ENCODE measurements at regions of chr3 and their contacts with region 1.

Region 1: DNA sequence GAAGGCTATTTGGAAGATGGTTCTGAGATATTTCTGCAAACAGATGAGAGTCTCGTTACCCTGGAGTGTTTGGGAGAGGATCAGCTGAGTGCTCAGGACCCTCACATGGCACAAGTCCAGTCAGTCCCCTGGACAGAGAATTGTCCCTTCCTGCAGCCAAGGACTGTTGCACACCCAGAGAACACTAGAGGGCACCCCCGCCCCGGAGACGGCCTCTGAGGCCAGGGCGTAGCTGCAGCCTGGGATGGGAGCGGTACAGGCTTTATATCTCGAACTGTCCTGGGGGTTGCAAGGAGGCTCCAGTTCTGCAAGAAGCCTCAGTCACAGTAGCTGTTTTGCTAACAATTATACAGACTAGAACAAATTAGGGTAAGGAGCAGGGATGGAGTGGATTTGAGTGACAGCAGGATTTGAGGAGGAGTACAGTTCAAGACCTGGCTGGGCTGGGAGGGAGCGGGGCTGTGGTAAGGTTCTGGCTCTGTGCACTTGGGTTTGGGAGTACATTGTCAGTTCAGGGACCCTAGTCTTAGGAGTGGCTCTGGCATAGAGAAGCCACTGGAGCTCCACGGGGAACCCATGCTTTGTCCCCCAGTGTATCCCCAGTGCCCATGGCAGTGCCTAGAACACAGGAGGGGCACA is 67.6 kb upstream of the HACD2 start:
- DNase-seq: peak; percentile 77 to 90
- H3K4me3 ChIP-seq: no peak overlapping the region
- H3K4me3 Mint-ChIP-seq: no peak overlapping the region
- H3K27ac Mint-ChIP-seq: no peak overlapping the region
- H3K4me1 ChIP-seq: no peaks in the 10 kb centered on the region; the same call in 1 of the 2 replicates
- H3K4me1 Mint-ChIP-seq: peaks cover 15% of the 10 kb centered on the region
- H3K27me3 ChIP-seq: no peaks in the 10 kb centered on the region
- H3K27me3 Mint-ChIP-seq: no peaks in the 10 kb centered on the region
- CTCF ChIP-seq: peak; percentile 87 to 96

Region 2: DNA sequence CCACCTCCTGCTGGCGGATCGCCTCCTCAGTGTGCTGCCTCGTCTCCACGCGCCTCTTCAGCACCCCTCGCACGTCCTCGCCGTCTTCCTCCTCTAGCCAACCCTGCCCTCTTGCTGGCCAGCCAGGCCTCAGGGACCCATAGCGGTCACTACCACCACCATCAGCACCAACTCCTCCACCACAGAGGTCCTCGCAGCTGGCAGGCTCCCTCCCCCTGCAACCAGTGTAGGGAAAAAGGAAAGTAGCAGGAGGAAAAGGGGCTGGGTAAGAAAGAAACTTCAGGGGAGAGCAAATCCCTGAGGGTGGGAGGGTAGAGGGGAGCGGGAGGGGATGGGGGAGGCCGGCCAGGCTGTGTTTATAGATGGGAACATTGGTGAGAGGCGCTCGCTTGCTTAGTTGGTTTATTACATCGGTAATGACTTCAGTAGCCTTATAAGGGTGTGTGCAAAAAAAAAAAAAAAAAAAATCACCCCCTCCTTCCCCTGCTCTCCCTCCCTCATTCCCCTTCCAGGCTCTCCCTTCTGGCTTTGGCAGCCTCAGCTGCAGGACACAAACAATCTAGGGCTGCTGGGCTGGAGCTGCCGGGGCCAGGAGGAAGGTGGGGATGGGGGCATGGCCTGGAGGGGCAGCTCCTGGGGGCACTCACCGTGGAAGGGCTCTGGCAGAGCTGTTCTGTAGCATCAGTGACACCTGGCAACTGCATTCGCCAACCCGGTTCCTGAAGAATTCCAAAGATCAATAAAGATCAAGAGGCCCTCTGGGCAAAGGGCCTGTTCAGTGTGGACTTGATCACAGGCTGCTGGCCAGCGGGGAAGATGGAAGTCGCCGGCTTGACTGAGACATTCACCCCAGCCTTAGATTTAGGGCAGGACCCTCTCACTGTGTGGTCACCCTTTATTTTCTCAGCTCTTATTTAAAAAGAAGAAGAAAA is 48.6 kb after region 1 on chr3:
- CTCF ChIA-PET with region 1: interaction called, 39 read pairs
- POLR2A ChIA-PET with region 1: no interaction called
- intact Hi-C with region 1: loop called (anchors 1 kb)
- DNase-seq: no peak
- H3K4me3 ChIP-seq: no peak overlapping the region
- H3K4me3 Mint-ChIP-seq: no peak overlapping the region
- H3K27ac Mint-ChIP-seq: no peak overlapping the region
- H3K4me1 ChIP-seq: peaks cover 11% of the 10 kb centered on the region
- H3K4me1 Mint-ChIP-seq: peaks cover 14% of the 10 kb centered on the region
- H3K27me3 ChIP-seq: no peaks in the 10 kb centered on the region
- H3K27me3 Mint-ChIP-seq: no peaks in the 10 kb centered on the region
- CTCF ChIP-seq: no peak

Measured in Caco-2 (cell line).